ENCODE measurements at regions of chr3 and their contacts with region 1.

Region 1: GRCh38 chr3:156674046-156674910 is at the start of gene TIPARP:
- DNase-seq: peak; percentile 95 to 100 (median 99)
- ATAC-seq: peak; percentile 79
- H3K4me3 ChIP-seq: peak within 1 kb of the TSS; percentile 85
- H3K4me3 Mint-ChIP-seq: peak within 1 kb of the TSS; percentile 93
- H3K27ac ChIP-seq: peak within 1 kb of the TSS; percentile 68 to 93
- H3K27ac Mint-ChIP-seq: peak within 1 kb of the TSS; percentile 96
- H3K4me1 ChIP-seq: peaks cover 23% of the 10 kb centered on the region
- H3K4me1 Mint-ChIP-seq: peaks cover 44% of the 10 kb centered on the region
- H3K27me3 ChIP-seq: no peaks in the 10 kb centered on the region
- H3K27me3 Mint-ChIP-seq: no peaks in the 10 kb centered on the region
- CTCF ChIP-seq: peak; percentile 63
- total RNA-seq, gene TIPARP: 158 to 166 TPM

Region 2: GRCh38 chr3:155859859-155860258 is 814.4 kb before region 1 on chr3:
- CTCF ChIA-PET with region 1: no interaction called
- POLR2A ChIA-PET with region 1: no interaction called
- intact Hi-C with region 1: loop called in 1 of 2 experiments (anchors 5 kb)
- DNase-seq: peak in 3 of 14 experiments; percentile 26 to 30 (median 26)
- ATAC-seq: no peak
- H3K4me3 ChIP-seq: no peak overlapping the region
- H3K4me3 Mint-ChIP-seq: no peak overlapping the region
- H3K27ac ChIP-seq: no peak overlapping the region
- H3K27ac Mint-ChIP-seq: no peak overlapping the region
- H3K4me1 ChIP-seq: peaks cover 20% of the 10 kb centered on the region
- H3K4me1 Mint-ChIP-seq: peaks cover 3% of the 10 kb centered on the region
- H3K27me3 ChIP-seq: no peaks in the 10 kb centered on the region
- H3K27me3 Mint-ChIP-seq: no peaks in the 10 kb centered on the region
- CTCF ChIP-seq: no peak

Region 3: DNA sequence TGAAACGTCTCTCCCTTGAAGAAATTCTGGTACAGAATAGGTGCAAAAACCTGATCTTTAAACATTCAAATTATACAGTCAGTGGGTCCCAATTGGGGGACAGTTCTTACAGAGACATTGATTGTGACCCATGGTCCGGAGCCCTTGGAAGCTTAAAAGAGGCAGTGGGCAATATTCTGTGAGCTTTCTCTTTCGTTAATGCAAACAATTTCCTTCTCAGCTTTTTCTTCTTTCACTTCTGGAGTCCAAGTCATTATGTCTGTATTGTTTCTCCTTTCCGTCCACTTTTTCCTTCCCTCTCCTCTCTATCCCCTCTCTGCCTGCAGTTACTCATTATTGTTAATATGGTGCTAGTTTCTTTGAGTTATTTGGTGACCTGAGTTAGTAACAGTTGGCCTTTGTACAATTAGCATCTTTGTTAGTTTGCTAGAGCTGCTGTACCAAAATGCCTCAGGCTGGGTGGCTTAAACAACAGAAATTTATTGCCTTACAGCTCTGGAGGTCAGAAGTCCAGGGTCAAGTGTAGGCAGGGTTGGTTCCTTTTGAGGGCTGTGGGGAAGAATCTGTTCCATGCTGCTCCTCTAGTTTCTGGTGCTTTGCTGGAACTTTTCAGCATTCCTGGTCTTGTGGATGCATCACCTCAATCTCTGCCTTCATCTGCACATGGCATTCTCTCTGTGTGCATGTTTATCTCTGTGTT is 701.2 kb before region 1 on chr3:
- CTCF ChIA-PET with region 1: no interaction called
- POLR2A ChIA-PET with region 1: no interaction called
- intact Hi-C with region 1: no loop called
- DNase-seq: no peak
- ATAC-seq: no peak
- H3K4me3 ChIP-seq: no peak overlapping the region
- H3K4me3 Mint-ChIP-seq: no peak overlapping the region
- H3K27ac ChIP-seq: no peak overlapping the region
- H3K27ac Mint-ChIP-seq: no peak overlapping the region
- H3K4me1 ChIP-seq: no peaks in the 10 kb centered on the region
- H3K4me1 Mint-ChIP-seq: no peaks in the 10 kb centered on the region
- H3K27me3 ChIP-seq: peaks cover 0 to 3% of the 10 kb centered on the region in 2 experiments
- H3K27me3 Mint-ChIP-seq: peaks cover 6% of the 10 kb centered on the region
- CTCF ChIP-seq: no peak

Region 4: GRCh38 chr3:156291272-156292123 is 382.8 kb before region 1 on chr3:
- CTCF ChIA-PET with region 1: no interaction called
- POLR2A ChIA-PET with region 1: no interaction called
- intact Hi-C with region 1: no loop called
- DNase-seq: peak in 5 of 14 experiments; percentile 3 to 65 (median 9)
- ATAC-seq: peak; percentile 58
- H3K4me3 ChIP-seq: no peak overlapping the region
- H3K4me3 Mint-ChIP-seq: no peak overlapping the region
- H3K27ac ChIP-seq: no peak overlapping the region
- H3K27ac Mint-ChIP-seq: no peak overlapping the region
- H3K4me1 ChIP-seq: peaks cover 14% of the 10 kb centered on the region
- H3K4me1 Mint-ChIP-seq: no peaks in the 10 kb centered on the region
- H3K27me3 ChIP-seq: peaks cover 36 to 54% of the 10 kb centered on the region in 2 experiments
- H3K27me3 Mint-ChIP-seq: peaks cover 92% of the 10 kb centered on the region
- CTCF ChIP-seq: no peak

Region 5: GRCh38 chr3:156602424-156602823 is 71.9 kb before region 1 on chr3:
- CTCF ChIA-PET with region 1: no interaction called
- POLR2A ChIA-PET with region 1: no interaction called
- intact Hi-C with region 1: loop called in 1 of 2 experiments (anchors 5 kb)
- DNase-seq: peak in 2 of 14 experiments; percentile 30 to 46
- ATAC-seq: peak; percentile 90
- H3K4me3 ChIP-seq: no peak overlapping the region
- H3K4me3 Mint-ChIP-seq: no peak overlapping the region
- H3K27ac ChIP-seq: no peak overlapping the region
- H3K27ac Mint-ChIP-seq: no peak overlapping the region
- H3K4me1 ChIP-seq: peaks cover 9% of the 10 kb centered on the region
- H3K4me1 Mint-ChIP-seq: peaks cover 20% of the 10 kb centered on the region
- H3K27me3 ChIP-seq: peaks cover 0 to 6% of the 10 kb centered on the region in 2 experiments
- H3K27me3 Mint-ChIP-seq: peaks cover 27% of the 10 kb centered on the region
- CTCF ChIP-seq: no peak

Region 6: DNA sequence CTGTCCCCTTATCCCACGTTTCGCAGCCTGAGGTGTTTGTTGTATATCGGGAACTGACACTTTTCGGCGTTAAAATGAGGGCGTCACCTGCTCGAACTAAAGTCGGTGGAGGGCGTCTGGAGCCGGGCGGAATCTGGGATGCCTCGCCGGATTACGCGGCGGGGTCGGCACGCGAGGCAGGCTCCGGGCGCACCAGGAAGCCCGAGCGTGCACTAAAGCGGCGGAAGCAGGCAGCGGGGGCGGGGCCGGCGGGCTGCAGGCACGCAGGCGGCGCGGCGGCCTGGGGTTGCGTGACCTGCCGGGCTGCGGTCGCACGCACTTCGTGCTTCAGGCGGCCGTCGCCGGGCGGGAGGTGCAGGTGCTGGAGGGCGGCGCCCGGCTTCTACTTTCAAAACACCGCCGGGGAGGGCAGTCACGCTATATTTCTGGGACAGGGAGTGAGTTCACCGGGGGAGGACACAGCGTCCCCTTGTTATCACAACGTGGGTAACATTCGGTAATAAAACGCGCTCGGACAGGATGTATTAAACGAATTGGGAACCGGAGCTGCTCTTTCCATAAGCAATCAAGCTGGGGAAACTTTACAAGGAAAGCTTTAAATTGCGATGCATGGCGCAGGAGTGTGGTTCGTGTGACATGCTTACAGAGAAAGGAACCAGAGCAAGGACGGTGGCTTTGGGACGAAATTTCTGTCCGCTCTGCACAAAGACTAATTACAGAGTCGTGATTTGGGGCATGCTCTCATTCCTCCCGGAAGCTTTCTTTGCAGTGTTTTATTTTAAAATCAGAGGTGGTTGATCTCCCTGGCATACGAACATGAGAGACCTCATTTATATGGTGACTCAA is 142.7 kb after region 1 on chr3:
- CTCF ChIA-PET with region 1: no interaction called
- POLR2A ChIA-PET with region 1: interaction called, 26 read pairs
- intact Hi-C with region 1: loop called (anchors 2 to 5 kb)
- DNase-seq: peak; percentile 66 to 97 (median 84)
- ATAC-seq: peak; percentile 81
- H3K4me3 ChIP-seq: peak overlapping the region; percentile 74
- H3K4me3 Mint-ChIP-seq: peak overlapping the region; percentile 93
- H3K27ac ChIP-seq: peak overlapping the region; percentile 65 to 74
- H3K27ac Mint-ChIP-seq: peak overlapping the region; percentile 89
- H3K4me1 ChIP-seq: peaks cover 24% of the 10 kb centered on the region
- H3K4me1 Mint-ChIP-seq: peaks cover 38% of the 10 kb centered on the region
- H3K27me3 ChIP-seq: no peaks in the 10 kb centered on the region
- H3K27me3 Mint-ChIP-seq: no peaks in the 10 kb centered on the region
- CTCF ChIP-seq: no peak

Region 7: GRCh38 chr3:157130467-157131251 is 456.4 kb after region 1 on chr3:
- CTCF ChIA-PET with region 1: interaction called, 17 read pairs
- POLR2A ChIA-PET with region 1: interaction called, 4 read pairs
- intact Hi-C with region 1: loop called (anchors 1 to 2 kb)
- DNase-seq: peak; percentile 57 to 94 (median 80)
- ATAC-seq: peak; percentile 69
- H3K4me3 ChIP-seq: peak overlapping the region; percentile 28
- H3K4me3 Mint-ChIP-seq: peak overlapping the region; percentile 80
- H3K27ac ChIP-seq: peak overlapping the region; percentile 80 to 92
- H3K27ac Mint-ChIP-seq: peak overlapping the region; percentile 98
- H3K4me1 ChIP-seq: peaks cover 80% of the 10 kb centered on the region
- H3K4me1 Mint-ChIP-seq: peaks cover 59% of the 10 kb centered on the region
- H3K27me3 ChIP-seq: no peaks in the 10 kb centered on the region
- H3K27me3 Mint-ChIP-seq: no peaks in the 10 kb centered on the region
- CTCF ChIP-seq: peak; percentile 87

Region 8: DNA sequence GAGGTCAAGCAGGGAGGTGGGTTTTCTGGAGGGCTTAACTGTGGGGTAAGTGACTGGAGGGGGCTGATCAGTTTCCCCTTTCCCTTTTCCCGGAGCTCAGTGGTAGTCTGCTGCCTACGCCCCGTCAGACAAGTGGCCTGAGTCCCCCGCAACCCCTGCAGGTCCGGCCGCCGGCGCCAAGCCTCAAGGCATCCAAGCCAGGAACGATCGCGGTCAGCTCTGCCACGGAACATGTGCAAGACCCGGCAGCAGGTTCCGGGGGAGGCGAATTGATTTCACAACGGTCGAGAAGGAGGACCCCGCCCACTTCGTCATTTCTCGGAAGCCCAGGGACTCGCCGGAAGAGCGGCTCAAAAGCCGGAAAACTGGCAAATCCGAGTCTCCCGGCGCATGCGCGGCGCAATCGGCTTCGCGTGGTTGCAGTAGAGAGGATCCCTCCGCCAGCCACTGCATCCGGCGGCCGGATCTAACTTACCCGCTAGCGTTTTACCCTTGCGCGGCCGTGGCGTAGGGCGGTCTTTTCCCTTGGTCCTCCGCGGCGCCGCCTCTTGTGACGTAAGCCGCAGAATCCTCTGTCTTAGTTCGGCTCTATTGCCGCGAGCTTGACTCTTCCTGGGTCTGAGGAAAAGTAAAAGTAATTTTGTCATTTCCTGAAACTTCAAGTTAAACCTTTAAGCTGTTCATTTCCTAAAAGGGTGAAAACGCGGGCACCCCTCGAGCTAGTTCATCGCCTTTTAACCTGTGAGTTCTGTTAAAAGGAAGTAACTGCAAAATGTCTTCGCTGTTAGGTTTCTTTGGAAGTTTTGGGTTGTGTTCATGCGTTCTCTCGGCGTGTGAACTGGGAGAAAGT is 500.6 kb after region 1 on chr3:
- CTCF ChIA-PET with region 1: no interaction called
- POLR2A ChIA-PET with region 1: interaction called, 39 read pairs
- intact Hi-C with region 1: no loop called
- DNase-seq: peak; percentile 93 to 100 (median 98)
- ATAC-seq: peak; percentile 91
- H3K4me3 ChIP-seq: peak overlapping the region; percentile 65
- H3K4me3 Mint-ChIP-seq: peak overlapping the region; percentile 92
- H3K27ac ChIP-seq: peak overlapping the region; percentile 96 to 98
- H3K27ac Mint-ChIP-seq: peak overlapping the region; percentile 98
- H3K4me1 ChIP-seq: peaks cover 18% of the 10 kb centered on the region
- H3K4me1 Mint-ChIP-seq: peaks cover 31% of the 10 kb centered on the region
- H3K27me3 ChIP-seq: no peaks in the 10 kb centered on the region
- H3K27me3 Mint-ChIP-seq: no peaks in the 10 kb centered on the region
- CTCF ChIP-seq: no peak

Measured in CD4-positive, alpha-beta T cell (primary cell).